ENCODE measurements at regions of chr4 and their contacts with region 1.

Region 1: DNA sequence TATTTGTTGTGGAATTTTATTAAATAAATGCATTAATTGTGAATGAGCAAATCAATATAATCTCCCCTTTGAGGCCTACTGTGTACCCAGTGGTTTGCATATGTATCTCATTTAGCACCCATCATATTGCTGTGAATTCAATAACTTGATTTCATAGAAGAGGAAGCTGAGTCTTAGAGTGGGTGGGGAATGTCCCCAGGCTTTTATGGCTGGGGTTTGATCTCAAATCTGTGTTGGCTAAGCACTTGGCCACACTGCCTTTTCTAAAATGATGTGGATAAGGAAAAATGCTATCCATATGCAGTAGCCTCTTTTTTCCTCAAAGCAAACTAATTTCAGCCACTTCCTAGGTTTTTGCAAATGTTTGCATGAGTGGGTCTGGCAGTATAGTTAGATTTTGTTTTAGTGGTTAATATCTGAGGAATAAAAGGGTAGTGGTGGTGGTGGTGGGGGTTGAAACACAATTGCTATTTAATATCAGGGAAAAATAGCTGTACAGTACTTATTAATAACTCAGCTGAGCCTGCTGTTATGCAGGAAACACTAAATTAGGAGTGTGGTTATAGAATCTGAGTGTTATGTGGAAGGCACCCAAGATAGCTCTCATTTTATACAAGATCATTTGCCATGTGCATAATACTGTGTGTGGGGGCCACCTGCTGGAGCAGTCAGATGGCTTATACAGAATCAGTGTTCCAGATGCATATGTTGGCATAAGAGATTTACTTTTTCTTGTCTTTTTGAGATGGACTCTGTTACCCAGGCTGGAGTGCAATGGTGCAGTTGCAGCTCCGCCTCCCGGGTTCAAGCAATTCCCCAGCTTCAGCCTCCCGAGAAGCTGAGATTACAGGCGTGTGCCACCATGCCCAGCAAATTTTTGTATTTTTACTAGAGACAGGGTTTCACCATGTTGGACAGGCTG is 108.0 kb downstream of the TMEM131L start:
- DNase-seq: peak; percentile 83
- ATAC-seq: peak; percentile 93
- H3K4me3 Mint-ChIP-seq: no peak overlapping the region
- H3K27ac Mint-ChIP-seq: peak overlapping the region; percentile 75
- H3K4me1 Mint-ChIP-seq: peaks cover 64% of the 10 kb centered on the region
- H3K27me3 Mint-ChIP-seq: no peaks in the 10 kb centered on the region

Region 2: GRCh38 chr4:153344131-153345010 is 229.8 kb before region 1 on chr4 and contains the start of gene MND1:
- CTCF ChIA-PET with region 1: interaction called, 70 read pairs
- POLR2A ChIA-PET with region 1: interaction called, 7 read pairs
- DNase-seq: peak; percentile 94
- ATAC-seq: peak; percentile 94
- H3K4me3 Mint-ChIP-seq: peak within 1 kb of the TSS; percentile 97
- H3K27ac Mint-ChIP-seq: peak within 1 kb of the TSS; percentile 94
- H3K4me1 Mint-ChIP-seq: peaks cover 47% of the 10 kb centered on the region
- H3K27me3 Mint-ChIP-seq: peaks cover 14% of the 10 kb centered on the region
- total RNA-seq, gene MND1: 37.4 to 38.3 TPM

Region 3: GRCh38 chr4:153432968-153433753 is 141.0 kb before region 1 on chr4:
- CTCF ChIA-PET with region 1: interaction called, 63 read pairs
- POLR2A ChIA-PET with region 1: interaction called, 6 read pairs
- DNase-seq: peak; percentile 90
- ATAC-seq: peak; percentile 82
- H3K4me3 Mint-ChIP-seq: peak overlapping the region; percentile 78
- H3K27ac Mint-ChIP-seq: peak overlapping the region; percentile 95
- H3K4me1 Mint-ChIP-seq: peaks cover 77% of the 10 kb centered on the region
- H3K27me3 Mint-ChIP-seq: no peaks in the 10 kb centered on the region

Region 4: GRCh38 chr4:153497988-153498967 is 75.9 kb before region 1 on chr4:
- CTCF ChIA-PET with region 1: interaction called, 14 read pairs
- POLR2A ChIA-PET with region 1: no interaction called
- DNase-seq: no peak
- ATAC-seq: no peak
- H3K4me3 Mint-ChIP-seq: peak overlapping the region; percentile 67
- H3K27ac Mint-ChIP-seq: peak overlapping the region; percentile 91
- H3K4me1 Mint-ChIP-seq: peaks cover 92% of the 10 kb centered on the region
- H3K27me3 Mint-ChIP-seq: no peaks in the 10 kb centered on the region

Region 5: GRCh38 chr4:153528705-153529485 is 45.2 kb before region 1 on chr4:
- CTCF ChIA-PET with region 1: interaction called, 22 read pairs
- POLR2A ChIA-PET with region 1: no interaction called
- DNase-seq: no peak
- ATAC-seq: peak; percentile 55
- H3K4me3 Mint-ChIP-seq: peak overlapping the region; percentile 75
- H3K27ac Mint-ChIP-seq: peak overlapping the region; percentile 91
- H3K4me1 Mint-ChIP-seq: peaks cover 87% of the 10 kb centered on the region
- H3K27me3 Mint-ChIP-seq: no peaks in the 10 kb centered on the region

Region 6: DNA sequence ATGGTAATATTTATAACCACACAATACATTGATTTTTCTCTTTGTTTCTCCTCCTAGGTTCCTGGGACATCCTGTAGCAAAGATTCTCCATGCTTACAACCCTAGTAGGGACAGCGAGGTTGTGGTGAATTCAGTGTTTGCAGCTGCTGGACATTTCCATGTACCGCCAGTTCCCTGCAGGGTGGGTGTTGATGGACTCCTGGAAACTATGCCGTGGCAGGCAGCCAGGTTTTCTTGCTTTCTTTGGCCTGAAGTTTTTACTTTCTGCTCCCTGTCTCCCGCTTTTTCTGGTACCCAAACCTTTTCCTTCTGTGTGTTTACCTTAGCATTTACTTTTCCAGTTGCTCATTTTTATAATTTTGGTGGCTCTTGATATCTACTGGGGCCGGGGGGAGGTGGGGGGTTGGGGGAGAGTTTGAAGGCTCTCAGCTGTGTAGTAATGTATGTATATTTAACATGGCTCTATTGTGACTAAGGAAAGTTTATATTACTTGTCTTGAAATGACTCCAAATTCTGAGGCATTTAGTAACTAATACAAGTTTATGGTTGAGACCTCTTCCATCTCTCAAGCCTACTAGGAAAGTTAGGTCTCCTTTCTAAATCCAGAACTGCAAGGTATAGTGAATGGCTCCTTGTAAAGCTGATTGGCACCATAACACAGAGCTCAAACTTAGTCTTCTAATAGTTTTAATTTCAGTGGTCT is 18.3 kb before region 1 on chr4:
- CTCF ChIA-PET with region 1: interaction called, 11 read pairs
- POLR2A ChIA-PET with region 1: no interaction called
- DNase-seq: no peak
- ATAC-seq: no peak
- H3K4me3 Mint-ChIP-seq: no peak overlapping the region
- H3K27ac Mint-ChIP-seq: no peak overlapping the region
- H3K4me1 Mint-ChIP-seq: peaks cover 15% of the 10 kb centered on the region
- H3K27me3 Mint-ChIP-seq: no peaks in the 10 kb centered on the region

Region 7: GRCh38 chr4:153809307-153809706 is 235.2 kb after region 1 on chr4:
- CTCF ChIA-PET with region 1: no interaction called
- POLR2A ChIA-PET with region 1: no interaction called
- DNase-seq: peak; percentile 62
- ATAC-seq: peak; percentile 92
- H3K4me3 Mint-ChIP-seq: no peak overlapping the region
- H3K27ac Mint-ChIP-seq: peak overlapping the region; percentile 30
- H3K4me1 Mint-ChIP-seq: peaks cover 26% of the 10 kb centered on the region
- H3K27me3 Mint-ChIP-seq: peaks cover 7% of the 10 kb centered on the region

Measured in activated CD8-positive, alpha-beta T cell treated with anti-CD3 and anti-CD28 coated beads, Interleukin-2, amount 10 ng/mL, durations not matched to agents 7 days and 5 days (primary cell).